WTC11 (cell line): ENCODE measurements at regions of chr11 and their contacts with region 1.

Region 1: DNA sequence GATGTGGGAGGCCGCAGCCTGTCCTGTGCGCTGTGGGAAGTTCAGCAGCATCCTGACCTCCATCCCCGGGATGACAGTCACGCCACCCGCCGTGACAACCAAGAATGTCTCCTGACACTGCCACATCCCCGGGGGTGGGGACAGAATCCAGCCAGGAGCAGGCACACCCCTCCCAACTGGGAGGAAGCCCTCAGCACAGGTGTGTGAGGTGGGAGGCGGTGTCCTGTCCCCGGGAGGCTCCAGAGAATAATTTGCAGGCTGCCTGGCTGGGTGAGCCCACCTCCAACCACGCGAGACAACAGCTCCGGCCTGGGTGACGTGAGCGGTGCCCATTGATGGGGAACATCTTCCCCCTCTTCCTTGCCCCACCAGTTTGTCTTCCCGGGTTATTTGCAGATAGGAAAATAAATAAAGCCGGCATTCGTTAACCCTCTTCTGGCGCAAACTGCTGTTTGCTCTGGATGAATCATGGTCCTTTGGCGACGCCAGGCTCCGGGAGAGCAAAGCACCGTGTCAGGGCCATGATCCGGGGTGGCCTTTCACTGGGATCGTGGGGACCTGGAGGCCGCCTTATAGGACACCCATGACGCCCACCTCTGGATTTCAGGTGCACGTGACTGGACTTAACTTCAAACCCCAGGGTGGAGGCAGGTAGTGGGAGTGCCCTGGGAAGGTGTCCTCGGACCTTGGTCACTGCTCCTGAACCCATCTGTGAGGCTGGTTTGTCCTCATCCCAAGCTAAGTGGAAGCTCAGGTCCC is 13.8 kb downstream of the CCND1 start:
- DNase-seq: no peak
- ATAC-seq: no peak; the same call in 1 of the 2 replicates
- H3K4me3 Mint-ChIP-seq: no peak overlapping the region
- H3K27ac Mint-ChIP-seq: 0 out of 2 replicates have a peak overlapping the region, but pooled peaks have one; percentile 45
- H3K4me1 Mint-ChIP-seq: peaks cover 28% of the 10 kb centered on the region
- H3K27me3 Mint-ChIP-seq: no peaks in the 10 kb centered on the region
- CTCF ChIP-seq: no peak

Region 2: DNA sequence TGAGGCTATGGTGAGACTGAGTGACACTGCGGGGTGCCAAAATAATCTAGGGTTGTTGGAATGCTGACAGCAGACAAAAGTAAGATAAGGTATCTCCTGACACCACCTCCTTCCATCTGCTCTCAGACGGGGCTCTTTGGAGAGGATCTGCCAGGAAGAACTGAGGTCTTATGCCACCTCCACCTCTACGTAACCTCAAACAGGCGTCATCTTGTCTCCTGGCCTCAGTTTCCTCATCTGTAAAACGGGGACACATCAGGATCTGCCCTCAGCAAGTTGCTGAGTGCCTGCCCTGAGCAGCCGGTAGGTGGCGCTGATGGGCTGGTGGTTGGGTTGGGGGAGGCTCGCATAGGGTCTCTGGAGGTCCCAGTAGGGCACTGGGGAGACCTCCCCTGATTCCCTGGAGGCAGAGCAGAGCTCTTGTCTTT is 362.5 kb before region 1 on chr11:
- CTCF ChIA-PET with region 1: interaction called, 10 read pairs
- POLR2A ChIA-PET with region 1: no interaction called
- DNase-seq: peak; percentile 80
- ATAC-seq: peak; percentile 43
- H3K4me3 Mint-ChIP-seq: no peak overlapping the region
- H3K27ac Mint-ChIP-seq: no peak overlapping the region
- H3K4me1 Mint-ChIP-seq: peaks cover 15% of the 10 kb centered on the region
- H3K27me3 Mint-ChIP-seq: no peaks in the 10 kb centered on the region
- CTCF ChIP-seq: peak; percentile 92

Region 3: DNA sequence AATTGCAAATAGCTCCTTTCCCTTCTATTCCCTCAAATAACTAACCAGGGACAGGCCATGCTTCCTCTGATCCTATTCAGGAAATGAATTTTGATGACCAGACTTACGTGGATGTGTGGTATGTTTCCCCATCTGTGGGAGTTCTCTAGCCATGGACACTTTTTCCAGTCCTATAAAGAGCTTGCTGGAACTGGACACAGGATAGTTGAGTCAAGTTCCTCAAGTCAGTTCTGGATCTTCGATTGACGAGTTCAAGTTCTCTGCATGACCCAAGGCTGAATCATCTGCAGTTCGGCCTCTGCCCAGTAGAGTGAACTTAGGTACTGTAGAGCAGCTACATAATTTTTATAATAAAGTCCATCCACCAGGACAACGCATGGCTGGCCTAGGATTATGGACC is 66.5 kb before region 1 on chr11:
- CTCF ChIA-PET with region 1: no interaction called
- POLR2A ChIA-PET with region 1: no interaction called
- DNase-seq: no peak
- ATAC-seq: no peak
- H3K4me3 Mint-ChIP-seq: no peak overlapping the region
- H3K27ac Mint-ChIP-seq: no peak overlapping the region
- H3K4me1 Mint-ChIP-seq: no peaks in the 10 kb centered on the region
- H3K27me3 Mint-ChIP-seq: peaks cover 2% of the 10 kb centered on the region; the same call in 1 of the 2 replicates
- CTCF ChIP-seq: no peak

Region 4: DNA sequence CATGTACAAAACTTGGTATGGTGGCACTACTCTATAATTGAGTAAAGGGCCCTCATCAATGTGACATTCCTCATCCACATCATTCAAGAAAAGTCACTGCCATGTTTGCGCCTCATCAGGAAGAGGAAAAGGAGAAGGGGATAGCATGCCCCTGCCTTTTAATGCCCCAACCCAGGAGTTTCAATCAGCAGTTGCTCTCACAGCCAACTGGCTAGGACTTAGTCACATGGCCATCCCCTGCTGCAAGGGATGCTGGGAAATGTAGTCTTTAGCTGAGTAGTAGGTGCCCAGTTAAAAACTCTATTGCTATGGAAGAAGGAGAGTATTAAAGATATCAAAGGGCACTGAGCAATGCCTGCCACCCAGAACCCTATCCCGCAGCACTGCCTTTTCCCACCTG is 24.7 kb before region 1 on chr11:
- CTCF ChIA-PET with region 1: no interaction called
- POLR2A ChIA-PET with region 1: no interaction called
- DNase-seq: no peak
- ATAC-seq: peak; percentile 69
- H3K4me3 Mint-ChIP-seq: no peak overlapping the region
- H3K27ac Mint-ChIP-seq: no peak overlapping the region
- H3K4me1 Mint-ChIP-seq: peaks cover 5% of the 10 kb centered on the region
- H3K27me3 Mint-ChIP-seq: peaks cover 4% of the 10 kb centered on the region
- CTCF ChIP-seq: no peak

Region 5: DNA sequence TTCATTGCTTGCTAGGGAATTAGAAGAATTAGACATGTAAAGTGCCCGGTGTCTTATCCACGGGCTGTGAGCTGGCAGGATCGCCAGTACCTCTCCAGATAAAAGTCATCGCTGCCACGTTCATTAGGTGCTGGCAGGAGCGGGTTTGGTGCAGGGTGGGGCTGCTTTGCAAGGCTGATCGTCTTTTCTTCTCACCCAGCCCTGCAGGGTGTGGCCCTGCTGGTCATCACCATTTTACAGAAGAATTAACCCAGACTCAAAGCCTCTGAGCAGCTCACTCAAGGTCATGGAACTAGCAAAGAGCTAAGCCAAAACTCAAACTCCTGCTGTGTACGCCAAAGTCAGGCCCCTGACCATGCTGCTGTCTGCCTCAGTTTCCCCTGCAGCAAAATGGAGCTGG is 126.5 kb after region 1 on chr11:
- CTCF ChIA-PET with region 1: no interaction called
- POLR2A ChIA-PET with region 1: no interaction called
- DNase-seq: no peak
- ATAC-seq: no peak
- H3K4me3 Mint-ChIP-seq: no peak overlapping the region
- H3K27ac Mint-ChIP-seq: no peak overlapping the region
- H3K4me1 Mint-ChIP-seq: peaks cover 8% of the 10 kb centered on the region
- H3K27me3 Mint-ChIP-seq: peaks cover 16% of the 10 kb centered on the region
- CTCF ChIP-seq: no peak

Region 6: DNA sequence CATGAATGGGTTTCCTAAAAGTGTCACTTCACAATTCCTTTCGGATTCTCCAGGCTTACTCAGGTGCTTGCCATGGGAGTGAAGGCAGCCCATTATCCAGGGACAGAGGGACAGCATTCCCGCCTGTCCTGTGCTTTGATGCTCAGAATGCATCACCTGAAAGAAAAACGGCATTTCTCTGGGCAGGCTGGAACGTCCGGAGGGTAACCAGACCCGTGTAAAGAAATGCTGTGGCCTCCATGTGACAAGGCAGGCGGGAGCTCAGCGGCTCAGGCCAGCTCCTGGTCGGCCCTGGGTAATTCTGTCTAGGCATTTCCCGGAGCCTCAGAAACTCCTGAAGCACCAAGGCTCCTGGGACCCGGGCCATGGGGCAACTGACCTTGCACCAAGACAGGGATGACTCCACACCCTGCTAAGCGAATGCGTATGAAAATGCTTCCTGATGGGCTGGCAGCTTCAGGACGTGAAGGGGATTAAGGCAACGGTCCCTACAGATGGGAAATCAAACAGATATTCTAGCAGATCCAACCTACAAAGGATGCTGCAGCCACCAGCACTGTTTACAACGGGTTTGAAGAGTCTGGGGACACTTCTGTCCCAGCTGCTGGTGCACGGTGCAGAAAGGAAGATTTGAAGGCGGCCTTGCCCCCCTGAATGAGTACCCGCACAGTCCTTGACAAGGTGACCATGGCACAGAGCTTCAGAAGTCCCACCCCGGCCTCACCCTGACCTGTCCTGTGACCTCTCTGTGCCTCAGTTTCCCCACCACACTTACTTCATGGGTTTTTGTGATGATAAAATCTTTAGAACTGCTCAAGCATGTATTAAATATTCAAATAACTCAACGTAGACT is 178.0 kb after region 1 on chr11:
- CTCF ChIA-PET with region 1: no interaction called
- POLR2A ChIA-PET with region 1: no interaction called
- DNase-seq: no peak
- ATAC-seq: peak; percentile 64
- H3K4me3 Mint-ChIP-seq: no peak overlapping the region
- H3K27ac Mint-ChIP-seq: peak overlapping the region; percentile 57; the same call in 1 of the 2 replicates
- H3K4me1 Mint-ChIP-seq: peaks cover 28% of the 10 kb centered on the region
- H3K27me3 Mint-ChIP-seq: no peaks in the 10 kb centered on the region; the same call in 1 of the 2 replicates
- CTCF ChIP-seq: no peak